ENCODE measurements at regions of chr9 and their contacts with region 1.

Region 1: DNA sequence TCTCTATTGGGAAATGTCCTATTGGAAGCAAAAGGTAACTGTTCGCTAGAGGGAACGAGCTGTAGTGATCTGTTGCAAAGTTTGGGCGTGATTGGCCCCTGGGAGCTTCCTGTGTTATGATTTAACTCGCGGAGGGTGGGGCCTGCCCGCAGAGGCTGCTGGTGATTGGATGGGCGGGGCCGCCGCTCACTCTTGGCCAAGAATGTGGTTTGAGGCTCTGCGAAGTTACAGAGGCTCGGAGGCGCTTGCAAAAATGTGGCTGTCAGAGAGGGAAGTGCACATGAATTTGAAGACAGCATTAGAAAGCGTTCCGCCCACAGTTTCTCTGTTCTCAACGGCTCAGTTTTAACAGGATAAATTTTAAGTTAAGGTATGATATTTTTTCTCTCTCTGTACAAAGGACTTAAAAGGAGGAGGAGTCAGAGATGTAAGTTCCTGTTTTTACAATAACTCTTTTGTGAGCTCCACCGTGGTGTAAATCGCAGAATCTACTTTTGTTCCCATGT is 46.9 kb downstream of the CNTRL start:
- DNase-seq: peak; percentile 91 to 98 (median 96)
- ATAC-seq: peak; percentile 95
- H3K4me3 ChIP-seq: peak overlapping the region; percentile 48 to 61
- H3K4me3 Mint-ChIP-seq: peak overlapping the region; percentile 89
- H3K27ac ChIP-seq: peak overlapping the region; percentile 54 to 64
- H3K27ac Mint-ChIP-seq: peak overlapping the region; percentile 98
- H3K4me1 ChIP-seq: peaks cover 40% of the 10 kb centered on the region
- H3K4me1 Mint-ChIP-seq: peaks cover 53% of the 10 kb centered on the region
- H3K27me3 ChIP-seq: no peaks in the 10 kb centered on the region
- H3K27me3 Mint-ChIP-seq: no peaks in the 10 kb centered on the region
- CTCF ChIP-seq: peak; percentile 30

Region 2: DNA sequence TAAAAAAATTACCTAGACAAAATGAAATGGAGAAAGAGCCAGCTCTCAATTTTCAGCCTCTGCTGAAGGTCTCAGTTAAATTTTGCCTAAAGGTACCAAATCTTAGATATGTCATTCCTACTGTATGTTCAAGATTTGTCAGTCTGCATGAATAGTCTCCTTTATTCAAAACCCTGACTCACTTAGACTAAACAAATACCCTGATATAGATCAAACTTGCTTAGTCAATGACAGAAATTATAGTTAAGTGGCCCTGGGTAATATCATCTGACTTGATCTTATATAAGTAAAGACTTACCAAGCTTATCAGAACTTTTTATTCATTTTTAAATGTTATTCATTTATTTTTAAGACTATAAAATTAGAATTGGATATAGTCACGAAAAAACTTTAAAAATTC is 419.6 kb before region 1 on chr9:
- CTCF ChIA-PET with region 1: no interaction called
- POLR2A ChIA-PET with region 1: no interaction called
- intact Hi-C with region 1: no loop called
- DNase-seq: no peak
- ATAC-seq: no peak
- H3K4me3 ChIP-seq: no peak overlapping the region
- H3K4me3 Mint-ChIP-seq: no peak overlapping the region
- H3K27ac ChIP-seq: no peak overlapping the region
- H3K27ac Mint-ChIP-seq: no peak overlapping the region
- H3K4me1 ChIP-seq: no peaks in the 10 kb centered on the region
- H3K4me1 Mint-ChIP-seq: peaks cover 6% of the 10 kb centered on the region
- H3K27me3 ChIP-seq: no peaks in the 10 kb centered on the region
- H3K27me3 Mint-ChIP-seq: no peaks in the 10 kb centered on the region
- CTCF ChIP-seq: no peak

Region 3: GRCh38 chr9:120842690-120843499 is 278.7 kb before region 1 on chr9 and contains the start of gene PSMD5:
- CTCF ChIA-PET with region 1: no interaction called
- POLR2A ChIA-PET with region 1: no interaction called
- intact Hi-C with region 1: loop called in 1 of 2 experiments (anchors 2 kb)
- DNase-seq: peak; percentile 88 to 99 (median 95)
- ATAC-seq: peak; percentile 88
- H3K4me3 ChIP-seq: peak within 1 kb of the TSS; percentile 92 to 97
- H3K4me3 Mint-ChIP-seq: peak within 1 kb of the TSS; percentile 94
- H3K27ac ChIP-seq: peak within 1 kb of the TSS; percentile 94 to 98
- H3K27ac Mint-ChIP-seq: peak within 1 kb of the TSS; percentile 98
- H3K4me1 ChIP-seq: peaks cover 65% of the 10 kb centered on the region
- H3K4me1 Mint-ChIP-seq: peaks cover 78% of the 10 kb centered on the region
- H3K27me3 ChIP-seq: no peaks in the 10 kb centered on the region
- H3K27me3 Mint-ChIP-seq: no peaks in the 10 kb centered on the region
- CTCF ChIP-seq: no peak
- total RNA-seq, gene PSMD5: 38.5 to 58.2 TPM

Region 4: GRCh38 chr9:121107041-121107440 is 14.6 kb before region 1 on chr9:
- CTCF ChIA-PET with region 1: interaction called, 9 read pairs
- POLR2A ChIA-PET with region 1: interaction called, 13 read pairs
- intact Hi-C with region 1: loop called in 1 of 2 experiments (anchors 1 kb)
- DNase-seq: peak in 2 of 9 experiments; percentile 39 to 59
- ATAC-seq: peak; percentile 96
- H3K4me3 ChIP-seq: no peak overlapping the region
- H3K4me3 Mint-ChIP-seq: no peak overlapping the region
- H3K27ac ChIP-seq: no peak overlapping the region
- H3K27ac Mint-ChIP-seq: no peak overlapping the region
- H3K4me1 ChIP-seq: peaks cover 4% of the 10 kb centered on the region
- H3K4me1 Mint-ChIP-seq: peaks cover 22% of the 10 kb centered on the region
- H3K27me3 ChIP-seq: no peaks in the 10 kb centered on the region
- H3K27me3 Mint-ChIP-seq: no peaks in the 10 kb centered on the region
- CTCF ChIP-seq: peak; percentile 61

Region 5: GRCh38 chr9:121156263-121156731 is 34.7 kb after region 1 on chr9:
- CTCF ChIA-PET with region 1: interaction called, 3 read pairs
- POLR2A ChIA-PET with region 1: interaction called, 4 read pairs
- intact Hi-C with region 1: loop called in 1 of 2 experiments (anchors 1 kb)
- DNase-seq: peak in 3 of 9 experiments; percentile 20 to 65 (median 38)
- ATAC-seq: peak; percentile 80
- H3K4me3 ChIP-seq: no peak overlapping the region
- H3K4me3 Mint-ChIP-seq: no peak overlapping the region
- H3K27ac ChIP-seq: peak overlapping the region in 1 of 2 experiments; percentile 54
- H3K27ac Mint-ChIP-seq: peak overlapping the region; percentile 85
- H3K4me1 ChIP-seq: peaks cover 9% of the 10 kb centered on the region
- H3K4me1 Mint-ChIP-seq: peaks cover 36% of the 10 kb centered on the region
- H3K27me3 ChIP-seq: no peaks in the 10 kb centered on the region
- H3K27me3 Mint-ChIP-seq: no peaks in the 10 kb centered on the region
- CTCF ChIP-seq: no peak

Region 6: DNA sequence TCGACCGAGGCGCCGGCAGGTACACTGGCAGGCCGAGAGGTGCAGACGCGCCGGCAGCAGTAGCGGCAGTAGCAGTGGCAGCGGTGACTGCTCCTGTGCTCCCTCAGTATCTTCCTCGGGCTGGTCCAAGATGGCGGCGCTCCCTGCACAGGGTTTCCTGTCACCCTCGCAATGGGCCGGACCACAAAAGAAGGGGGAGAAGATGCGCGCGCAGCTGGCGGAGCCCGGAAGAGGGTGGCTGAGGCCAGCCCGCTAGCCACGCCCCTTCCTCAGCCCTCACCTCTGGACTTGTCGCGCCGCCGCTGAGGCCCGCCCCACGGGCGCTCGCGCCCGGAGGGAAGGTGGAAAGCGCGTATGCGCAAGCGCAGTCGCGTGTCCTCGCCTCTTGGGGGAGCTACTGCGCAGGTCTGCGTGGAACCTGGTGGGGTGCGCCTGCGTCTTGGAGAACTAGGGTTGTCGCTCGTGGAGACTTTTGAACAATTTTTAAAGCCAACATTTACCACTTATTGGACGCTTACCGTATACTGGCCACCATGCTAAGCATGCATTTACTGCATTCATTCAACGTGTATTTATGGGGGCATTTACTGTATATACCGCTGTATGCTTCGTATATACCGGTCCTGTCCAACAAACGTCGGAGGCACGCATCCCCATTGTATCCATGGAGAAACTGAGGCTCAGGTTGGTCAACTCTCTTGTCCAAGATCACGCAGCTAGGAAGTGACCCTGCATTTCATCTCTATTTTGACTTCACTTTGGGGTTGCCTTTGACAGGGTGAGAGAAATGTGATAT is 80.3 kb after region 1 on chr9 and contains the start of gene RAB14:
- CTCF ChIA-PET with region 1: no interaction called
- POLR2A ChIA-PET with region 1: interaction called, 14 read pairs
- intact Hi-C with region 1: loop called (anchors 1 to 2 kb)
- DNase-seq: peak; percentile 100
- ATAC-seq: peak; percentile 90
- H3K4me3 ChIP-seq: peak within 1 kb of the TSS; percentile 77 to 79
- H3K4me3 Mint-ChIP-seq: peak within 1 kb of the TSS; percentile 96
- H3K27ac ChIP-seq: peak within 1 kb of the TSS; percentile 79 to 82
- H3K27ac Mint-ChIP-seq: peak within 1 kb of the TSS; percentile 97
- H3K4me1 ChIP-seq: peaks cover 41% of the 10 kb centered on the region
- H3K4me1 Mint-ChIP-seq: peaks cover 53% of the 10 kb centered on the region
- H3K27me3 ChIP-seq: no peaks in the 10 kb centered on the region
- H3K27me3 Mint-ChIP-seq: no peaks in the 10 kb centered on the region
- CTCF ChIP-seq: no peak
- total RNA-seq, gene RAB14: 58.8 to 60.4 TPM

Region 7: DNA sequence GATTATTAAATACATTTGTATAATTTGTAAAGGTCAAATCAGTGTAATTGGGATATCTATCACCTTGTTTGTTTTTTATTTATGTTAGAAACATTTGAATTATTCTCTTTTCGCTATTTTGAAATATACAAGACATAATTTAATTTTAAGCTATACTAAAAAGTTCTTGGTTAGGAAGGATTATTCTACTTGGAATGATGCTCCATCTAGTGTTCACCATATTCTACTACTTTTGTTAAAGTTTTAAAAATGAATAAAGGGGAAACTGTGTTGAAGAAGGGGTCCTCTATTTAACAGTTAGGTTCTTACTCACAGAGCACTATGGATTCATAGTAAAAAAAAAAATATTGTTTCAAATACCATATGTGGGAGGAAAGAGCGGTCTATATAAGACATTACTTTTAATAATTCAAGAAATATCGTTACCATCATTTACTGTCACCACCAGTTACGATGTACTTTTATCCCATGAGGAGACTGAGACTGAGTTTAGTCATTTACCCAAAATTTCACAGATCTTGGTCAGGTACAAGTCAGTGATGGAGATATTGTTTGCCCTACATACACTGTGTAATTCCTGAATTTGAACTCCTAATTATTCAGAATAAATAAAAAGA is 254.7 kb after region 1 on chr9:
- CTCF ChIA-PET with region 1: no interaction called
- POLR2A ChIA-PET with region 1: no interaction called
- intact Hi-C with region 1: no loop called
- DNase-seq: peak in 2 of 9 experiments; percentile 43 to 60
- ATAC-seq: no peak
- H3K4me3 ChIP-seq: no peak overlapping the region
- H3K4me3 Mint-ChIP-seq: no peak overlapping the region
- H3K27ac ChIP-seq: no peak overlapping the region
- H3K27ac Mint-ChIP-seq: no peak overlapping the region
- H3K4me1 ChIP-seq: no peaks in the 10 kb centered on the region
- H3K4me1 Mint-ChIP-seq: peaks cover 22% of the 10 kb centered on the region
- H3K27me3 ChIP-seq: no peaks in the 10 kb centered on the region
- H3K27me3 Mint-ChIP-seq: no peaks in the 10 kb centered on the region
- CTCF ChIP-seq: peak; percentile 61

Region 8: GRCh38 chr9:122159026-122159924 is 1037.6 kb after region 1 on chr9 and contains the starts of genes MORN5 and NDUFA8:
- CTCF ChIA-PET with region 1: no interaction called
- POLR2A ChIA-PET with region 1: no interaction called
- intact Hi-C with region 1: loop called in 1 of 2 experiments (anchors 5 kb)
- DNase-seq: peak; percentile 90 to 98 (median 96)
- ATAC-seq: peak; percentile 96
- H3K4me3 ChIP-seq: peak within 1 kb of the TSS; percentile 68 to 99
- H3K4me3 Mint-ChIP-seq: peak within 1 kb of the TSS; percentile 99
- H3K27ac ChIP-seq: peak within 1 kb of the TSS; percentile 74 to 86
- H3K27ac Mint-ChIP-seq: peak within 1 kb of the TSS; percentile 98
- H3K4me1 ChIP-seq: peaks cover 27% of the 10 kb centered on the region
- H3K4me1 Mint-ChIP-seq: peaks cover 42% of the 10 kb centered on the region
- H3K27me3 ChIP-seq: no peaks in the 10 kb centered on the region
- H3K27me3 Mint-ChIP-seq: peaks cover 14% of the 10 kb centered on the region
- CTCF ChIP-seq: no peak
- total RNA-seq, gene MORN5: not detected
- total RNA-seq, gene NDUFA8: 5.7 to 7.0 TPM

Measured in CD8-positive, alpha-beta T cell (primary cell).